ENCODE measurements at regions of chr15 and their contacts with region 1.

Region 1: DNA sequence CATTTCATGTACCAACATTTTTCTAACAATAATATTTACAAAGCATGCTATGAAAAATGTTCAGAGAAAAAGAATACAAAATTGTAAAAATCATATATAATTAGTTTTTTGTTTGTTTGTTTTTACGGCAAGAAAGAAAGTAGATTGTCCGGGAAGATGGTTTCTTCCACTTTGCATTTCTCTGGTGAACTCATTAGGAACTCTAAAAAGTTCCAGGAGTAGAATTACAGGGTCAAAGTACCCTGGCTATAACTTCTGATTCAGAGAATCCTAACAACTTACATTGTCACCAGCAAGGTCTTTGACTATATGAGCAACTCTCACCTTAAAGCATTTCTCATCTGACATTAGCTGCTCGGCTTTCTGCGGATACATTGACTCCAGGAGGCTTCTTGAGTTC is 196.7 kb downstream of the PDE8A start:
- DNase-seq: no peak
- ATAC-seq: no peak
- H3K4me3 ChIP-seq: no peak overlapping the region
- H3K27ac ChIP-seq: no peak overlapping the region
- H3K4me1 ChIP-seq: no peaks in the 10 kb centered on the region
- H3K27me3 ChIP-seq: peaks cover 0 to 3% of the 10 kb centered on the region in 2 experiments; a peak in 2 of 4 replicates
- CTCF ChIP-seq: no peak
- EP300 ChIP-seq: no peak
- POLR2A ChIP-seq: no peak
- RAD21 ChIP-seq: no peak

Region 2: GRCh38 chr15:85289677-85290365 is 111.5 kb after region 1 on chr15:
- CTCF ChIA-PET with region 1: no interaction called
- POLR2A ChIA-PET with region 1: no interaction called
- RAD21 ChIA-PET with region 1: no interaction called
- SMC1A ChIA-PET with region 1: no interaction called
- in situ Hi-C with region 1: loop called (anchors 5 kb)
- intact Hi-C with region 1: no loop called
- DNase-seq: no peak
- ATAC-seq: peak; percentile 69
- H3K4me3 ChIP-seq: no peak overlapping the region
- H3K27ac ChIP-seq: no peak overlapping the region
- H3K4me1 ChIP-seq: peaks cover 4% of the 10 kb centered on the region
- H3K27me3 ChIP-seq: no peaks in the 10 kb centered on the region; a peak in 2 of 4 replicates
- CTCF ChIP-seq: peak; percentile 55 to 69 (median 56); a peak in 5 of 6 replicates
- EP300 ChIP-seq: no peak
- POLR2A ChIP-seq: no peak
- RAD21 ChIP-seq: peak; percentile 73